Activated T-helper 1 cell treated with anti-CD3 and anti-CD28 coated beads, Interleukin-12 subunit alpha, Interleukin-12 subunit beta, Interleukin-2, Interleukin-4 antibody, amounts not matched to agents 30 ng/mL and 10 ng/mL and 1 ng/mL, durations not matched to agents 14 hours and 24 hours and 36 hours (primary cell): ENCODE measurements at regions of chr13 and their contacts with region 1.

Region 1: GRCh38 chr13:93476175-93476574 is 249.6 kb downstream of the GPC6 start:
- DNase-seq: no peak
- H3K4me3 Mint-ChIP-seq: no peak overlapping the region
- H3K27ac Mint-ChIP-seq: no peak overlapping the region
- H3K4me1 Mint-ChIP-seq: no peaks in the 10 kb centered on the region
- H3K27me3 Mint-ChIP-seq: no peaks in the 10 kb centered on the region

Region 2: DNA sequence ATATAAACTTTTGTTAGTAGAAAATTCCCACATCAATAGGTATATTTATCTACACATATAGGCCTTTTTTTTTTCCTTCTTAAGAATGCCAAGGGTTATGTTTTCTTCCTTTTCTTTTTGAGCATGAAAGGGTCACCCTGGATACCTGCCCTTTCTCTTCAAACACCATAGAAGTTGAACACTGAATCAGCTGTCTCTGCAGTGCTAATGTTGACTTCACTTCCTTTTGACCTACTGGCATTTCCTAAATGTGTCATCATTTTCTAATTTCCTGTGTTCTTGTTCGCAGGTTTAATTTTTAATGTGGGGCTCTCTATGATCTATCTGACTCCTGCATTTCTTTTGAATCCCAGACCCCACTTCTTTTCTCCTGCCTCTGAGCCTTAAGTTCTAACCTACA is 282.4 kb after region 1 on chr13:
- intact Hi-C with region 1: loop called (anchors 5 kb)
- DNase-seq: no peak
- H3K4me3 Mint-ChIP-seq: no peak overlapping the region
- H3K27ac Mint-ChIP-seq: no peak overlapping the region
- H3K4me1 Mint-ChIP-seq: no peaks in the 10 kb centered on the region
- H3K27me3 Mint-ChIP-seq: peaks cover 3% of the 10 kb centered on the region